ENCODE measurements at regions of chr4 and their contacts with region 1.

Region 1: DNA sequence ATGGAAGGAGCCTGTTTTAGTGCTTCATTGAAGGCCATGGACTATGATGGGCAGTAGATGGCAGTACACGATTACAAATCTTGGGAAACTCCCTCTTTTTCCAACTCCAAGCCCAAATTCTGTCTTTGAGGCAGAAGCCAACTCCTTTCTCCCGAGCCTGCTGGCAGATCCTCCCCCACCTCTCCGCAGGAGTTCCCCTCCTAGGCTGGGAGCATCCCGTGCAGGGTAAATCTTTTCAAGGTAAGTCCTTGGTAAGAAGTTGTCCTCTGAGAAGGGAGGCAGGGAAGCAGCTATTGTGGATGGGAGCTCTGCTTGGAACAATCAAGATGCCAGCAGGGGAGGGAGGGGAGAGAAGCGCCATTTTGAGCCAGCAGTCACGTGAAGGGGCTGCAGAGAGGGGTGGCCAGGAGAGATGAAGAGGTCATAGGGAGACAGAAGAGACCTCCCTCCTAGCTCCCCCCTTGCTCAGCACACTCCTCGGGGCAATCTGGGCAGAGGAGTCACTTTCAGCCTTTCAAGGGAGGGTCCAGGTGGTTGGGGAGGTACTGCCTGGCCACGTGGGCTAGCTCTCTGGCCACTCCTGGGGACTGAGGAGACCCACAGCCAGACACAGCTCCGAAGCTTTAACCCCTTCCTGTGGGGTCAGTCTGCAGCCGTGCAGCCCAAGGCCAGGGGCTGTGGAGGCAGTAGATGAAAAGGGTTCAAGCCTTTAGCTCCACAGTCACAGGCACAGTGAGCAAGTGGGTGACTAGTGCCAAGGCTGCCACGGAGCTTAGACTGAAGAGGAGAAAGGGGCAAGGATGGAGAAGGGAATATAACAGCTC is 9.6 kb downstream of the CC2D2A start:
- DNase-seq: peak; percentile 89
- H3K4me3 ChIP-seq: peak overlapping the region; percentile 24 to 81 (median 44)
- H3K27ac ChIP-seq: peak overlapping the region; percentile 66
- H3K4me1 ChIP-seq: peaks cover 10% of the 10 kb centered on the region
- H3K27me3 ChIP-seq: no peaks in the 10 kb centered on the region
- CTCF ChIP-seq: peak; percentile 71 to 73
- POLR2A ChIP-seq: no peak

Region 2: DNA sequence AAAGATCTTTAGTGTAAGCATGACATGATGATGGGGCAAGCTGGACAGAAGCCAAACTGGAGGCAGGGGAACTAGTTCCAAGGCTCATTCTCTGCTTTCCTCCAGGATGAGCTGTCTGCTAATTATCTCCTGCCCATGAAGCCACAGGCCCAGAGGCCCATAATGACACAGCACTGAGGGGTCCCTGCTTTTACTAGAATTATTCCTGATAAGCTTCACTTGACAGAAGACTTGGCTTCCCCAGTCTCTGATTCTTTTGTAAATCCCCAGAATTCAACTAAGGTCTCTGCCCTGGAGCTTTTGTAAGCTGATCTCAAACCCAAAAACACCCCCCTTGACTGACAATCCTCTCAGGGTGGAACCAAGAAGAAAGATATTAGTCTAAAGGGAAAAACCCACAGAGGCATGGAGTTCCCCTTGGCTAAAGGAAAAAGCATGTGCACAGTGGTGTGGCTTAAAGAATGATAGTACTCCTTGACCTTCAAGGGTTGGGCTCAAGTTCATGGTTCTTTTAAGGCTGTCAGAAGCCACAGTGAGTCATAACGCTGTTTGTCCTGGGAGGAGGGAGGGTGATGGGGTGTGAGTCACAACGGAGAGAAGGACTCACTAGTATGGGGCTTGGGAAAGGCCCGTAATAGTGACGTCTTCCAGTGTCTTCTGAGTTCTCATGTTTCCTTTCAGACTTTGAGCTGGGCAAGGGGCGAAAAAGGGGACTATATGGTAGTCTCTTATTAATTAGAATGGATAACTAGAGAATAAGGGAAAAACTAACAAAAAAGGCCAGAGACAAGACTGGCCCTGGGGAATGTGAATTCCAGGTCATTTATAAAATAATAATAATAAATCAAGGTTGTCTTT is 623.0 kb before region 1 on chr4:
- CTCF ChIA-PET with region 1: no interaction called
- POLR2A ChIA-PET with region 1: no interaction called
- dilution Hi-C with region 1: no loop called
- intact Hi-C with region 1: no loop called
- DNase-seq: peak; percentile 35
- H3K4me3 ChIP-seq: no peak overlapping the region
- H3K27ac ChIP-seq: no peak overlapping the region
- H3K4me1 ChIP-seq: no peaks in the 10 kb centered on the region
- H3K27me3 ChIP-seq: no peaks in the 10 kb centered on the region
- CTCF ChIP-seq: no peak
- POLR2A ChIP-seq: no peak

Region 3: GRCh38 chr4:15649914-15650545 is 170.7 kb after region 1 on chr4:
- CTCF ChIA-PET with region 1: interaction called, 13 read pairs
- POLR2A ChIA-PET with region 1: no interaction called
- dilution Hi-C with region 1: no loop called
- intact Hi-C with region 1: loop called (anchors 1 kb)
- DNase-seq: peak; percentile 44
- H3K4me3 ChIP-seq: no peak overlapping the region
- H3K27ac ChIP-seq: no peak overlapping the region
- H3K4me1 ChIP-seq: peaks cover 28% of the 10 kb centered on the region
- H3K27me3 ChIP-seq: no peaks in the 10 kb centered on the region
- CTCF ChIP-seq: peak; percentile 50 to 67
- POLR2A ChIP-seq: no peak

Region 4: GRCh38 chr4:15675356-15675755 is 196.1 kb after region 1 on chr4:
- CTCF ChIA-PET with region 1: interaction called, 13 read pairs
- POLR2A ChIA-PET with region 1: no interaction called
- dilution Hi-C with region 1: no loop called
- intact Hi-C with region 1: no loop called
- DNase-seq: no peak
- H3K4me3 ChIP-seq: no peak overlapping the region
- H3K27ac ChIP-seq: no peak overlapping the region
- H3K4me1 ChIP-seq: peaks cover 30% of the 10 kb centered on the region
- H3K27me3 ChIP-seq: no peaks in the 10 kb centered on the region
- CTCF ChIP-seq: no peak
- POLR2A ChIP-seq: no peak

Region 5: GRCh38 chr4:15956179-15956850 is 477.0 kb after region 1 on chr4:
- CTCF ChIA-PET with region 1: interaction called, 150 read pairs
- POLR2A ChIA-PET with region 1: no interaction called
- dilution Hi-C with region 1: no loop called
- intact Hi-C with region 1: loop called (anchors 1 kb)
- DNase-seq: peak; percentile 69
- H3K4me3 ChIP-seq: no peak overlapping the region
- H3K27ac ChIP-seq: no peak overlapping the region
- H3K4me1 ChIP-seq: no peaks in the 10 kb centered on the region
- H3K27me3 ChIP-seq: no peaks in the 10 kb centered on the region
- CTCF ChIP-seq: peak; percentile 75 to 84
- POLR2A ChIP-seq: no peak

Region 6: DNA sequence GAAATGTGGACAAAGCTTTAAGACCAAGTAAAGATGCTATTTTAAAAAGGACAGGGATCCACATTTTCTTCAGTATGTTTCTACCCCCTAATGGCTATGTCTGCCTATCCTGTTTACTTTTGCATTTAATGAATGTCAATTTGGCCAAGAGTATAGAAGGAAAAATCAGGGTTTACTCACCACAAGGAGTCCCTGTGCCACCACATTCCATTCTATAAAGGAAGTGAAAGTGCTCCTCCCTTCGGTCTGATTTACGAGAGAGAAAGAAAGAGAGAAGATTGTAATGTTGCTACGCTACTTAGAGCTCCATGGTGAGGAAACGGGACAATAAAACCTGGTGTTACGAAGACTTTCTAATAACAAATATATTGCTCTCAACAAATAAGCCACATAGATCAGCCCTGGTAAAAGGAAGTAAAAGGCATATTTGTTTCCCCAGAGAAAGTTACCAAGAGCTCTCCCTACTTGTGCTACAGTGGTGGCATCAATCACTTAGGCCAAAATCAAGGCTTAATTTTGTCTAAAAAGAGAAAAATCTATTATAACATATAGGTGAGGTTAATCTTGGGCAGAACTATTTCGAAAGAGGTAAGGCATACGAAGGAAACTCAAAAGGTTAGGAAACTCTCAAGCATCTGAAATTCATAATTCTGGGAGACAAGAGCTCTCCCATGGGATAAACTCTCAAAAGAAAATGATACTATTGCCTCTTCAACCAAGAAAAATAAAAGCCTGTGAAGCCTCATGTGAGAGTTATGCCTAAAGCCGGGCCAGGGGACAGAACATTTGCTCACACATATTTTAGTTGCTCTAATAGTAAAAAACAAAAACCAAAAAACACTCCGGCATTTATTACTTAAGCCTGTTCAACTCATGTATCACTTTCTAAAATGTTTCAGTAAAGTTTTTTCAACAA is 717.4 kb after region 1 on chr4:
- CTCF ChIA-PET with region 1: interaction called, 7 read pairs
- POLR2A ChIA-PET with region 1: no interaction called
- dilution Hi-C with region 1: no loop called
- intact Hi-C with region 1: loop called (anchors 10 kb)
- DNase-seq: peak; percentile 83
- H3K4me3 ChIP-seq: peak overlapping the region in 2 of 3 experiments; percentile 34 to 67
- H3K27ac ChIP-seq: peak overlapping the region; percentile 68
- H3K4me1 ChIP-seq: peaks cover 27% of the 10 kb centered on the region
- H3K27me3 ChIP-seq: no peaks in the 10 kb centered on the region
- CTCF ChIP-seq: peak; percentile 28 to 32
- POLR2A ChIP-seq: no peak